WTC11 (cell line): ENCODE measurements at regions of chr3 and their contacts with region 1.

Region 1: GRCh38 chr3:14780927-14781507 is 37.7 kb upstream of the FGD5 start:
- DNase-seq: peak; percentile 86
- ATAC-seq: peak; percentile 95
- H3K4me3 Mint-ChIP-seq: no peak overlapping the region
- H3K27ac Mint-ChIP-seq: no peak overlapping the region
- H3K4me1 Mint-ChIP-seq: peaks cover 18% of the 10 kb centered on the region
- H3K27me3 Mint-ChIP-seq: no peaks in the 10 kb centered on the region
- CTCF ChIP-seq: peak; percentile 57

Region 2: DNA sequence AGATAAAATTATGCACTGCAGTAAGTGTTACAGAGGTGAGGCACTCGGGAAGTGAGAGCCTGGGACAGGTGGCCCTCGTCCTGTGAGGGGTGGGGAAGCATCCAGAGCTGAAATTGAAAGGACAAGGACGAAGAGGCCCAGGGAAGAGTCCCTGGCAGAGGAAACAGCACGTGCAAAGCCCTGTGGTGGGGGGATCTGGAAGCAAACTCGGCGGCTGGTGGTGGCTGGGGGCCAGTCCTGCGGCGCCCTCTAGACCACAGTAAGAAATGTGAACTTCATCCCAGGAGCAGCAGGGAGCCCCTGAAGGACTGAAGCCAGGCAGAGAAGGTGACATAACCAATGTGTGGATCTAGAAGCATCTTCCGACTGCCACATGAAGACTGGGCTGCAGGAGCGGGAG is 283.7 kb before region 1 on chr3:
- CTCF ChIA-PET with region 1: no interaction called
- POLR2A ChIA-PET with region 1: no interaction called
- DNase-seq: peak; percentile 49
- ATAC-seq: peak; percentile 86
- H3K4me3 Mint-ChIP-seq: no peak overlapping the region
- H3K27ac Mint-ChIP-seq: no peak overlapping the region
- H3K4me1 Mint-ChIP-seq: peaks cover 3% of the 10 kb centered on the region
- H3K27me3 Mint-ChIP-seq: peaks cover 4% of the 10 kb centered on the region
- CTCF ChIP-seq: no peak

Region 3: DNA sequence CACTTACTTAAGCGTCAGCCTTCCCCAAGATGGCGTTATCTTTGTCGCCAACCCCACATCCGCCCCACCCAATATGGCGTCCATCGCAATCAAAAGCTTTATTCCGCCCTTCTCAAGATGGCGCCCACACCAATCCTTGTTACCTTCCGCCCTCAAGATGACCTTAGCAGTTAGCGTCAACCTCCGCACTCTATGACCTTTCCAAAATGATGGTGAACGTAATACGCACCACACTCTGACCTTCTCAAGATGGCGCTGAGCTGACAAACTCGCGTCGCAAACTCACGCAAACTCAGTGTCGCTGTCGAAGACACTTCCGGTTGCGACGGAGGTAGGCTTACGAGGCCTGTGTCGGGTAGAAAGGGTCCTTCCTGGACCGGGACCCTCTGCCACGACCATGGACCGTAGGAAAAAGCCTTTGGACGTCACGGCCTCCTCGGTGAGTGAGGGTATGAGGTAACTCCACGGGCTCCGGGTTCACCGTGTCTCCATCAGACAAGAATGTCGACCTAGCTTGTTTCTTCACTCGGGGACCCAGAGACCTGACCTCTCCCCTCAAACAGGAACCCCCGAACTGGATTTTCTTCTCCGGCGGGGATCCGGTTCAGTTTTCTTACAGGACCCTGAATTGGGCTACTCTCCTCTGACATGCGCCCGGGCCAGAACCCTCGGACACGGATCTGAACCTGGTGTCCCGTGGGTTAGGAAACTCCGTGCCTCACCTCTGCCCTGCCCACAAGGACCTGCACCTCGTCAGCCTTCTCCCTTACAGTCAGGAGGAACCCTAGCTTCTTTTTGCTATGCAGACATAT is 129.4 kb before region 1 on chr3 and contains the start of gene CCDC174:
- CTCF ChIA-PET with region 1: interaction called, 10 read pairs
- POLR2A ChIA-PET with region 1: no interaction called
- DNase-seq: peak; percentile 89
- ATAC-seq: peak; percentile 98
- H3K4me3 Mint-ChIP-seq: peak within 1 kb of the TSS; percentile 97
- H3K27ac Mint-ChIP-seq: peak within 1 kb of the TSS; percentile 100
- H3K4me1 Mint-ChIP-seq: peaks cover 10% of the 10 kb centered on the region
- H3K27me3 Mint-ChIP-seq: peaks cover 9% of the 10 kb centered on the region
- CTCF ChIP-seq: no peak
- total RNA-seq, gene CCDC174: 11.3 to 16.0 TPM (median 13.8 TPM) in 3 replicates

Region 4: GRCh38 chr3:14678015-14678503 is 103.0 kb before region 1 on chr3:
- CTCF ChIA-PET with region 1: interaction called, 59 read pairs
- POLR2A ChIA-PET with region 1: no interaction called
- DNase-seq: no peak
- ATAC-seq: peak; percentile 44
- H3K4me3 Mint-ChIP-seq: no peak overlapping the region
- H3K27ac Mint-ChIP-seq: no peak overlapping the region
- H3K4me1 Mint-ChIP-seq: no peaks in the 10 kb centered on the region
- H3K27me3 Mint-ChIP-seq: peaks cover 3% of the 10 kb centered on the region; the same call in 1 of the 2 replicates
- CTCF ChIP-seq: no peak

Region 5: DNA sequence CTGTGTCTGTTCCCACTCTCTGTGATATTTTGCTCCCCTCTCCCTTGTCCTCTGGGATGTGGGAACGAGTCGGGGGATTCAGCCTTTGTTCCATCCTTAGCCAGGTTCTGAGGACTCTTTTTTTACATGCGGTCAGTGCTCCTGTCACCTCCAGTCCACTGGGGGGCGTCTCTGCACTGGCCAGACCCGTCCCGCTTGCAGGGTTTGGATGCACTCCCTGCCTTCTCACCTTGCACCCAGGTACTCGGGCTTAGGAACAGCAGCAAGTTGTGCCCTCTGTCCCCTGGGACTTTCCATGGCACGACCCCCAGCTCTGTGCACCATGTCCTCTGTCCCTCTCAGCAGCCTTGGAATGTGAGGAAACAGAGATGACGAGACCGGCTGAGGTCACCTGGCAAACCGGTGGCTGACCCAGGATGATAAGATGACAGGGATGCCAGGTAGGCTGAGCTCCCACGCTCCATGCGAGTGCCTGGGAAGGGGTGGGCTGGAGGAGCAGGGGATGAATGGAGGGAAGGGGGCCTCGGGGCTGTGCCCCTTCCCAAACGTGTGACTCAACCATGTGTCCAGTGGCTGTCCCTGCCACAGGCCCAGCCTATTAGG is 10.4 kb after region 1 on chr3:
- CTCF ChIA-PET with region 1: interaction called, 51 read pairs
- POLR2A ChIA-PET with region 1: no interaction called
- DNase-seq: peak; percentile 86
- ATAC-seq: peak; percentile 95
- H3K4me3 Mint-ChIP-seq: peak overlapping the region; percentile 57
- H3K27ac Mint-ChIP-seq: no peak overlapping the region
- H3K4me1 Mint-ChIP-seq: peaks cover 8% of the 10 kb centered on the region
- H3K27me3 Mint-ChIP-seq: no peaks in the 10 kb centered on the region
- CTCF ChIP-seq: peak; percentile 82

Region 6: DNA sequence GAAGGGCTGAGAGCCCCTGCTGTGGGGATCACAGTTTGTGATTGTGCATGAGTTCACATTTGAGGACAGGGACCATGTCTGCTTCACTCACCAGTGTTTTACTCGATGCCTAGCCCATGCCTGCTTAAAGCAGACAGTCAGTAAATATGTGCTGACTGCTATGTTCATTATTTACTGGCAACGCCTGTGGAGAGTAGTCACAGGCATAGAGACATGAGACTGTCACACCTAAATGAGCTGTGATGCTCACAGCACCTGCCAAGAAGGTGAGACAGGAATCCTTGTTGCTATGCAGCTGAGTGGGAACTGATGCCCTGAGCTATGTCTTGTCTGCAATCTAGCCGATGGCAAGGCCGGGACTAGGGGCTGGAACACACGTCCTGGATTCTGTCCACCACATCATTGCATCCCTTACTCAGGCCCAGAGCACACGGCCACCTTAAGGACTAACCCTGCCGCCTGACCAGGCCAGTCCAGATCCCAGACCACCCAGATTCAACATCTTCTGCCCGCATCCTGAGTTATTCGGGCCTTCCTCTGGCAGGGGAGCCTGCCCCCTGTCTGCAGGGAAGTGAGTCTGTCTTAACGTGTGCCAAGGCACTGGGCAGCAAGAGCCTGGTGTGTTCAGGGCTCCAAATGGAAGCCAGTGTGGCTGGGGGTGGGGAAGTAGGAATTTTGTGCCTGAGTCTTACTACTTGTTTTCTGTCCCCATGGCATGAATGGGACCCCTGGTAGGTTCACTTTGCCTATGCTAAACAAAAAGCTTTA is 82.5 kb after region 1 on chr3:
- CTCF ChIA-PET with region 1: interaction called, 13 read pairs
- POLR2A ChIA-PET with region 1: no interaction called
- DNase-seq: peak; percentile 40
- ATAC-seq: peak; percentile 82
- H3K4me3 Mint-ChIP-seq: no peak overlapping the region
- H3K27ac Mint-ChIP-seq: no peak overlapping the region
- H3K4me1 Mint-ChIP-seq: peaks cover 31% of the 10 kb centered on the region
- H3K27me3 Mint-ChIP-seq: no peaks in the 10 kb centered on the region
- CTCF ChIP-seq: peak; percentile 24; the same call in 1 of the 2 replicates

Region 7: DNA sequence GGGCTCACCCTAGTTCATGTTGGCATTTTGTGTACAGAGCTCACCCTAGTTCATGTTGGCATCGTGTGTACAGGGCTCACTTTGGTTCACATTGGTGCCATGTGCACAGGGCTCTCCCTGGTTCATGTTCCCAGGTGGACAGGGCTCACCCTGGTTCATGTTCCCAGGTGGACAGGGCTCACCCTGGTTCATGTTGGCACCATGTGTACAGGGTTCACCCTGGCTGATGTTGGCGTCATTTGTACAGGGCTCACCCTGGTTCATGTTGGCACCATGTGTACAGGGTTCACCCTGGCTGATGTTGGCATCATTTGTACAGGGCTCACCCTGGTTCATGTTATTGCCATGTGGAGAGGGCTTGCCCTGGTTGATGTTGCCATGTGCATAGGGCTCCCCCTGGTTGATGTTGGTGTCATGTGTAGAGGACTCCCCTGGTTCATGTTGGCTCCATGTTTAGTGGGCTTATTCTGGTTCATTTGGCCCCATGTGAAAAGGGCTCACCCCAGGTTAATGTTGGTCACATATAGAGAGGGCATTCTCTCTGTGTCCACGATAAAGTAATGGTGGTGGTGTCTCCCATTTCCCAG is 134.7 kb after region 1 on chr3:
- CTCF ChIA-PET with region 1: interaction called, 44 read pairs
- POLR2A ChIA-PET with region 1: no interaction called
- DNase-seq: no peak
- ATAC-seq: no peak
- H3K4me3 Mint-ChIP-seq: no peak overlapping the region
- H3K27ac Mint-ChIP-seq: no peak overlapping the region
- H3K4me1 Mint-ChIP-seq: peaks cover 6% of the 10 kb centered on the region
- H3K27me3 Mint-ChIP-seq: no peaks in the 10 kb centered on the region
- CTCF ChIP-seq: no peak